CD8-positive, alpha-beta T cell (primary cell): ENCODE measurements at regions of chr11 and their contacts with region 1.

Region 1: GRCh38 chr11:35822815-35823495 is 120.9 kb upstream of the LDLRAD3 start:
- DNase-seq: no peak
- ATAC-seq: no peak
- H3K4me3 ChIP-seq: no peak overlapping the region
- H3K4me3 Mint-ChIP-seq: no peak overlapping the region
- H3K27ac ChIP-seq: no peak overlapping the region
- H3K27ac Mint-ChIP-seq: no peak overlapping the region
- H3K4me1 ChIP-seq: no peaks in the 10 kb centered on the region
- H3K4me1 Mint-ChIP-seq: peaks cover 13% of the 10 kb centered on the region
- H3K27me3 ChIP-seq: no peaks in the 10 kb centered on the region
- H3K27me3 Mint-ChIP-seq: peaks cover 3% of the 10 kb centered on the region
- CTCF ChIP-seq: no peak

Region 2: DNA sequence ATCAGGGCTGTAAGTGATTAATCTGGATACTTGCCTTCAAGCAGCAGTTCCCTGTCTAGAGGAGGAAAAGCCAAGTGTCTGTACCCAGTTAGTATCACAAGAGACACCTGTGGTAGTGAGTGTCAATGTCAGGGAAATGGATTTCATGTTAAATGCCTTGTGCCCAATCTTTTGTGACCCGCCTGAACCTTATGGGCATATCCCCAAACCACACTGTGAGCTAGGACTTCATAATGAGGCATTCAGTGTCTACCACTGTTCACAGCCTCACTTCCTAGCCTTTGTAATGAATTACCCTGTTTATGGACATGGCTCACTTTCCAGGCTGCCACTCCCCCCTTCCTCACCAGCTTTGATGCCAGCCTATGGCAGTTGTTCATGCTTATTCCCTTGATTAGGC is 35.3 kb before region 1 on chr11:
- CTCF ChIA-PET with region 1: no interaction called
- POLR2A ChIA-PET with region 1: no interaction called
- intact Hi-C with region 1: loop called in 1 of 2 experiments (anchors 2 kb)
- DNase-seq: no peak
- ATAC-seq: no peak
- H3K4me3 ChIP-seq: no peak overlapping the region
- H3K4me3 Mint-ChIP-seq: no peak overlapping the region
- H3K27ac ChIP-seq: no peak overlapping the region
- H3K27ac Mint-ChIP-seq: no peak overlapping the region
- H3K4me1 ChIP-seq: peaks cover 22% of the 10 kb centered on the region
- H3K4me1 Mint-ChIP-seq: peaks cover 59% of the 10 kb centered on the region
- H3K27me3 ChIP-seq: no peaks in the 10 kb centered on the region
- H3K27me3 Mint-ChIP-seq: no peaks in the 10 kb centered on the region
- CTCF ChIP-seq: no peak

Region 3: GRCh38 chr11:35794850-35795249 is 28.1 kb before region 1 on chr11:
- CTCF ChIA-PET with region 1: interaction called, 21 read pairs
- POLR2A ChIA-PET with region 1: no interaction called
- intact Hi-C with region 1: no loop called
- DNase-seq: no peak
- ATAC-seq: no peak
- H3K4me3 ChIP-seq: no peak overlapping the region
- H3K4me3 Mint-ChIP-seq: no peak overlapping the region
- H3K27ac ChIP-seq: no peak overlapping the region
- H3K27ac Mint-ChIP-seq: no peak overlapping the region
- H3K4me1 ChIP-seq: no peaks in the 10 kb centered on the region
- H3K4me1 Mint-ChIP-seq: peaks cover 20% of the 10 kb centered on the region
- H3K27me3 ChIP-seq: no peaks in the 10 kb centered on the region
- H3K27me3 Mint-ChIP-seq: no peaks in the 10 kb centered on the region
- CTCF ChIP-seq: no peak

Region 4: DNA sequence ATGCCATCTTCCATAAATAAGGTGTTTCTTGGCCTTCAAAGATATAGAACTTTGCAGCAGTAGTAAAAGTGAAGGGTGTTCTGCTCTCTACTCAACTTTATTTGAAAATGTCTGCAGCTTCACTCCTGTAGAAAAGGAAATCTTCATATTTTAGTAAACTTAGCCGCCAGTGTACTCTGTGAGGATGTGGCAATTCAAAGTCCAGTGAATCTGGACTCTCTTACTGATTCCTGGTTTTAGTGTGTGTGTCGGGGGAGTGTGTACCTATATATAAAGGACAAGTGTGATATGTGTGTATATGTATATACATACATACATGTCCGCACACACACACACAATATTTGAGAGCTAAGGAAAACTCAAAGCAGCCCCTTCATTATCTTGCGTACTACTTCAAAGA is 13.4 kb before region 1 on chr11:
- CTCF ChIA-PET with region 1: interaction called, 20 read pairs
- POLR2A ChIA-PET with region 1: no interaction called
- intact Hi-C with region 1: no loop called
- DNase-seq: no peak
- ATAC-seq: no peak
- H3K4me3 ChIP-seq: no peak overlapping the region
- H3K4me3 Mint-ChIP-seq: no peak overlapping the region
- H3K27ac ChIP-seq: no peak overlapping the region
- H3K27ac Mint-ChIP-seq: no peak overlapping the region
- H3K4me1 ChIP-seq: no peaks in the 10 kb centered on the region
- H3K4me1 Mint-ChIP-seq: no peaks in the 10 kb centered on the region
- H3K27me3 ChIP-seq: no peaks in the 10 kb centered on the region
- H3K27me3 Mint-ChIP-seq: no peaks in the 10 kb centered on the region
- CTCF ChIP-seq: no peak

Region 5: GRCh38 chr11:35838071-35838470 is 15.1 kb after region 1 on chr11:
- CTCF ChIA-PET with region 1: interaction called, 24 read pairs
- POLR2A ChIA-PET with region 1: no interaction called
- intact Hi-C with region 1: no loop called
- DNase-seq: no peak
- ATAC-seq: no peak
- H3K4me3 ChIP-seq: no peak overlapping the region
- H3K4me3 Mint-ChIP-seq: no peak overlapping the region
- H3K27ac ChIP-seq: no peak overlapping the region
- H3K27ac Mint-ChIP-seq: no peak overlapping the region
- H3K4me1 ChIP-seq: no peaks in the 10 kb centered on the region
- H3K4me1 Mint-ChIP-seq: no peaks in the 10 kb centered on the region
- H3K27me3 ChIP-seq: no peaks in the 10 kb centered on the region
- H3K27me3 Mint-ChIP-seq: peaks cover 32% of the 10 kb centered on the region
- CTCF ChIP-seq: no peak

Region 6: DNA sequence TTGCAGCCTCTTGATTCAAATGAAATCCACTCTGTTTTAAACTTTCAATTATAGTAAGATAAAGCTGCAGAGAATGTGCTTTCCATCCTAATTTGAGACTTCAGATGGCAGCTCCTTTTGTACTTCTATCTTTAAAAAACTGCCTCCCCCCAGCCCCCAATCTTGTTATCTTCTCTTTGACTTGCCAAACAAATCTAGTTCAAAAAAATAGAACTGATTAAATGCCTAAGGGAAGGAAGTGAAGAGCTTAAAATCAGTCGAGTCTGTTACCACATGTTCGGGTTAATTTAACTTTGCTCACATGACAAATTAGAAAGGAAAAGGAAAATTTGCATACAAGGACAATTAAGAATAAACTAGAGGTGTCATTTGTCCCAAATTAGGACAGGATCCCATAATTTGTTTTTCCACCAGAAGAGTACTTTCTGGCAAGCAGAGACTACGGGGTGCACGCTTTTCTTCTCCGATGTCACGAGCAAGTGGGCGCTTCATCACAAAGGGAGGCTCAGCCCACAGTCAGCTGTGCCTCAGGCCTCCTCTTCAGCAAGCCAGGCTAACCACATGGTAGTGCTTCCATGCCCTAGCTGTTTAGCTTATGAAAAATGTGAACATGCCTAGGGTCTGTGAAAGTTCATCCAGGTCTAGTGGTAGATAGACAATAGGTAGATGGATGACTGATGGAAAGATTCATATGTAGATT is 51.9 kb after region 1 on chr11:
- CTCF ChIA-PET with region 1: no interaction called
- POLR2A ChIA-PET with region 1: no interaction called
- intact Hi-C with region 1: no loop called
- DNase-seq: no peak
- ATAC-seq: no peak
- H3K4me3 ChIP-seq: no peak overlapping the region
- H3K4me3 Mint-ChIP-seq: no peak overlapping the region
- H3K27ac ChIP-seq: no peak overlapping the region
- H3K27ac Mint-ChIP-seq: no peak overlapping the region
- H3K4me1 ChIP-seq: no peaks in the 10 kb centered on the region
- H3K4me1 Mint-ChIP-seq: no peaks in the 10 kb centered on the region
- H3K27me3 ChIP-seq: no peaks in the 10 kb centered on the region
- H3K27me3 Mint-ChIP-seq: peaks cover 14% of the 10 kb centered on the region
- CTCF ChIP-seq: no peak

Region 7: GRCh38 chr11:35893796-35894475 is 71.0 kb after region 1 on chr11:
- CTCF ChIA-PET with region 1: no interaction called
- POLR2A ChIA-PET with region 1: no interaction called
- intact Hi-C with region 1: no loop called
- DNase-seq: no peak
- ATAC-seq: no peak
- H3K4me3 ChIP-seq: no peak overlapping the region
- H3K4me3 Mint-ChIP-seq: no peak overlapping the region
- H3K27ac ChIP-seq: no peak overlapping the region
- H3K27ac Mint-ChIP-seq: no peak overlapping the region
- H3K4me1 ChIP-seq: no peaks in the 10 kb centered on the region
- H3K4me1 Mint-ChIP-seq: no peaks in the 10 kb centered on the region
- H3K27me3 ChIP-seq: no peaks in the 10 kb centered on the region
- H3K27me3 Mint-ChIP-seq: peaks cover 23% of the 10 kb centered on the region
- CTCF ChIP-seq: no peak

Region 8: GRCh38 chr11:35943713-35944655 is 121.0 kb after region 1 on chr11 and contains the start of gene LDLRAD3:
- CTCF ChIA-PET with region 1: no interaction called
- POLR2A ChIA-PET with region 1: no interaction called
- intact Hi-C with region 1: no loop called
- DNase-seq: peak in 6 of 9 experiments; percentile 7 to 35 (median 18)
- ATAC-seq: no peak
- H3K4me3 ChIP-seq: peak within 1 kb of the TSS; percentile 6 to 31
- H3K4me3 Mint-ChIP-seq: peak within 1 kb of the TSS; percentile 77
- H3K27ac ChIP-seq: no peak within 1 kb of the TSS
- H3K27ac Mint-ChIP-seq: no peak within 1 kb of the TSS
- H3K4me1 ChIP-seq: no peaks in the 10 kb centered on the region
- H3K4me1 Mint-ChIP-seq: peaks cover 11% of the 10 kb centered on the region
- H3K27me3 ChIP-seq: no peaks in the 10 kb centered on the region
- H3K27me3 Mint-ChIP-seq: peaks cover 64% of the 10 kb centered on the region
- CTCF ChIP-seq: no peak
- total RNA-seq, gene LDLRAD3: not detected

Region 9: GRCh38 chr11:36009473-36009872 is 186.5 kb after region 1 on chr11:
- CTCF ChIA-PET with region 1: no interaction called
- POLR2A ChIA-PET with region 1: no interaction called
- intact Hi-C with region 1: no loop called
- DNase-seq: no peak
- ATAC-seq: no peak
- H3K4me3 ChIP-seq: no peak overlapping the region
- H3K4me3 Mint-ChIP-seq: no peak overlapping the region
- H3K27ac ChIP-seq: no peak overlapping the region
- H3K27ac Mint-ChIP-seq: no peak overlapping the region
- H3K4me1 ChIP-seq: no peaks in the 10 kb centered on the region
- H3K4me1 Mint-ChIP-seq: no peaks in the 10 kb centered on the region
- H3K27me3 ChIP-seq: no peaks in the 10 kb centered on the region
- H3K27me3 Mint-ChIP-seq: peaks cover 20% of the 10 kb centered on the region
- CTCF ChIP-seq: no peak

Region 10: DNA sequence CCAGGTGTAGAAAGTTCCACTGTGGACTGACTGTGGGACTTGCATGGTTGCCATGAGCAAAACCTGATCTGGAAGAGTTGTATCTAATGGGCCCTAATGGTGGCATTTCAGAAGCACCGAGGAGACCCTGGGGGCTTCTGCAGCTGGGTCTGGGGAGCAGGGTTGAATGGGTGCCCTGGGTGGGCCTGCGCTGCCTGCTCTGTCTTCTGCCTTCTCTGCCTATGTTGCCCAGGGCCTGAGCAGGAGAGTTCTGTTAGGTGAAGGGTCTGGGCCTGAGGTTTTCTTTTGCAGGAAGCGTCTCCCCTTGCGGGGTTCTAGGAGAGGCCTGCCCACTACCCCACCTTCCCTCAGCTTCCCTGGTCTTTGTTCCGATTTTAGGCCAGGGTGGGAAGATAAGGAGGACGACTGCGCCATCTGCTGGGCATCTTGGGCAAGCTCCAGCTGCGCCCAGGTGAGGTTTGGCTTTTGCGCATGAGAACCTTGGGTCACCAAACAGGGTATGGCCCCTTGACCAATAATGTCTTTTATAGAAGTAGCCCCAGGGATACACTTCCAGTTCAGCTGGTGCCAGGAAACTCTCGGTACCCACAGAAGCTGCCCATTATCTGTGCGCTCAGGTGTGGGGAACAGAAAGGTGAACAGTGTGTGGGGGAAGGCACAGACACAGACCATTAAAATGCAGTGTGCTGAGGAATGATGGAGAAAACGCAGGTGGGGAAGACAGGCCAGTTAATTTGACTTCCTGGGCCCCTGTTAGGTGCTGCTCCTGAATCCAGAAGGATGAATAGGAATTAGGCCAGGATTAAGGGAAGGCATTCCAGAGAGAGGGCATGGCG is 443.1 kb after region 1 on chr11:
- CTCF ChIA-PET with region 1: interaction called, 8 read pairs
- POLR2A ChIA-PET with region 1: no interaction called
- intact Hi-C with region 1: loop called in 1 of 2 experiments (anchors 5 kb)
- DNase-seq: peak; percentile 13 to 72 (median 48)
- ATAC-seq: peak; percentile 63
- H3K4me3 ChIP-seq: no peak overlapping the region
- H3K4me3 Mint-ChIP-seq: no peak overlapping the region
- H3K27ac ChIP-seq: no peak overlapping the region
- H3K27ac Mint-ChIP-seq: no peak overlapping the region
- H3K4me1 ChIP-seq: no peaks in the 10 kb centered on the region
- H3K4me1 Mint-ChIP-seq: no peaks in the 10 kb centered on the region
- H3K27me3 ChIP-seq: no peaks in the 10 kb centered on the region
- H3K27me3 Mint-ChIP-seq: peaks cover 18% of the 10 kb centered on the region
- CTCF ChIP-seq: peak; percentile 71